CD4-positive, alpha-beta memory T cell (primary cell): ENCODE measurements at regions of chr11 and their contacts with region 1.

Region 1: DNA sequence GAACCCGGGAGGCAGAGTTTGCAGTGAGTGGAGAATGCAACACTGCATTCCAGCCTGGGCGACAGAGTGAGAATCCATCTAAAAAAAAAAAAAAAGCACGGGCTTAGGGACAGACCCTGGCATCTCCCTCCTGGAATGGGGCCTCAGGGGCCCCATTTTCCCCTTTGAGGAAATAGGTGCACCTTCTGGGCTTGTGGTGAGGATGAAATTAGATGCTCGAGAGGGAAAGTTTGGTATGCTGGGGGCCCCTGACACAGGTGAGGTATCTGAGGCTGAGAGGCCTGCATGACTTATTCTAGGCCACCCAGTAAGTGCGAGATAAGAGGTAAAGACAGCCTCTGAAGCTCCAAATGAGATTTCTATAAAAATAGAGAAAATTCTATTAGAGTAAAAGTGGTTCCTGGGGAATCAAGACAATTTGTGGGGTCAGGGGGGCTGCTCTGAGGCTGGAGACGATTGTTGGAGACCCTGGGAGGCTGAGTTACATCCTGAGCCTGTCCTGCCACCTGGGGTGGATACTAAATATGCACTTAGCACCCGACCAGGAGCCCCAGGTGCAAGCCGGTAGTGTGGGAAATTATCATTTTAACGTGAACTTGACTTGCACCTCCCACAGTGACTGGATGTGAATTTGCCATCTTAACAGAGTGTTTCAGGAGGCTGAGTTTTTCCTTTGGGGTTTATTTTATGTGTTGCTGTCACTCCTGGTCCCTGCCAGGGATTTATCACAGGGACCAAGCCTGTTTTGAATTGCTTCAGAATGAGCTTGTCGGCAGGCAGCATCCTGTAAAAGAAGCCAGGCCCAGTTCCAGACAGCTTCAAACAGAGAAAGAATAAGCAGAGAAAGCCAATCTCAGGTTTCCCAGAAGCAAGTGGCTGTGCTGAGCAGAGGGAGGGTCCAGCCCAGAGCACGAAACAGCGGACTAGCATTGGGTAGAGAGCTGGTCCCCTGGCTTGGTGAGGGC is 48.4 kb upstream of the TSKU start:
- DNase-seq: no peak
- H3K4me3 ChIP-seq: no peak overlapping the region
- H3K4me3 Mint-ChIP-seq: no peak overlapping the region
- H3K27ac ChIP-seq: no peak overlapping the region
- H3K27ac Mint-ChIP-seq: no peak overlapping the region
- H3K4me1 ChIP-seq: no peaks in the 10 kb centered on the region
- H3K4me1 Mint-ChIP-seq: no peaks in the 10 kb centered on the region
- H3K27me3 ChIP-seq: no peaks in the 10 kb centered on the region
- H3K27me3 Mint-ChIP-seq: peaks cover 3 to 5% of the 10 kb centered on the region in 2 donors

Region 2: DNA sequence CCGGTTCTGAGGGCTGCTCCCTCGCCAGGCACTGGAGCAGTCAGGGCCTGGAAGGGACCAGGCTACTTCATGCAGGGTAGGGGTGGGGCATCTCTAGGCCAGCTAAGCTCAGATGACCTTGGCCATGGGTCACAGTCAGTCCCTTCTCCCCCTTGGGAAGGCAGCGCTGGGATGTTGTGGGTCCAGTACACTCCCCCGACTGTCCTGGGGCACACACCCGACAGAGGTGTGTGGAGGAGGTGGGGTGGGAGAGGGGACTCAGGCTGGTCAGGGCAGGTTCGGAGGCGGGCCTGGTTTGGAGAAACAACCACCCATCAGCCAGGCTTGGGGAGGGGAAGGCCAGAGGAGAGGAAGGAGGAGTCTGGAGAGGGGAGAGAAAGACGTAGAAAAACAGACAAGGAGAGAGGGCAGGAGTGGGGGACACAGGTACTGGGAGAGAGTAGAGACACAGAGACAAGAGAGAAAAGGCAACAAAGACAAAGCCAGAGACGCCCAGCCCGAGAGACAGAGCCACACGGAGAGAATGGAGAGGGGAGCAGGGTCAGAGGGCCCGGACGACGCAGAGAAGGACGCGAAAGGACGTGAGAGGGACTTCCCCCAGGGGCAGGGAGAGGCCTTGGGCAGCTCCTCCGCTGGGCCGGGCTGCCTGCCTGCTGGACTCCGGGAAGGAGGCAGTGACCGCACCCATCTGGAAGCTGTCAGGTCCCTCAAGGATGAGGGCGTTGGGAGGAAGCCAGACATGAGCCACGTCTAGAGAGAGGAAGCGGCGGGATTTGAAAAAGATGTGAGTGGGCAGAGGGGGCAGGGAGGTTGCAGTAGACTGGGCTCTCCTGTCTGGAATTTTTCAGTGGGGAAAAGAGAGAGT is 17.8 kb after region 1 on chr11:
- CTCF ChIA-PET with region 1: no interaction called
- POLR2A ChIA-PET with region 1: no interaction called
- intact Hi-C with region 1: no loop called
- DNase-seq: no peak
- H3K4me3 ChIP-seq: no peak overlapping the region
- H3K4me3 Mint-ChIP-seq: no peak overlapping the region
- H3K27ac ChIP-seq: no peak overlapping the region
- H3K27ac Mint-ChIP-seq: peak overlapping the region in 1 of 7 donors; percentile 16
- H3K4me1 ChIP-seq: no peaks in the 10 kb centered on the region
- H3K4me1 Mint-ChIP-seq: no peaks in the 10 kb centered on the region
- H3K27me3 ChIP-seq: no peaks in the 10 kb centered on the region
- H3K27me3 Mint-ChIP-seq: peaks cover 4% of the 10 kb centered on the region in 2 donors

Region 3: DNA sequence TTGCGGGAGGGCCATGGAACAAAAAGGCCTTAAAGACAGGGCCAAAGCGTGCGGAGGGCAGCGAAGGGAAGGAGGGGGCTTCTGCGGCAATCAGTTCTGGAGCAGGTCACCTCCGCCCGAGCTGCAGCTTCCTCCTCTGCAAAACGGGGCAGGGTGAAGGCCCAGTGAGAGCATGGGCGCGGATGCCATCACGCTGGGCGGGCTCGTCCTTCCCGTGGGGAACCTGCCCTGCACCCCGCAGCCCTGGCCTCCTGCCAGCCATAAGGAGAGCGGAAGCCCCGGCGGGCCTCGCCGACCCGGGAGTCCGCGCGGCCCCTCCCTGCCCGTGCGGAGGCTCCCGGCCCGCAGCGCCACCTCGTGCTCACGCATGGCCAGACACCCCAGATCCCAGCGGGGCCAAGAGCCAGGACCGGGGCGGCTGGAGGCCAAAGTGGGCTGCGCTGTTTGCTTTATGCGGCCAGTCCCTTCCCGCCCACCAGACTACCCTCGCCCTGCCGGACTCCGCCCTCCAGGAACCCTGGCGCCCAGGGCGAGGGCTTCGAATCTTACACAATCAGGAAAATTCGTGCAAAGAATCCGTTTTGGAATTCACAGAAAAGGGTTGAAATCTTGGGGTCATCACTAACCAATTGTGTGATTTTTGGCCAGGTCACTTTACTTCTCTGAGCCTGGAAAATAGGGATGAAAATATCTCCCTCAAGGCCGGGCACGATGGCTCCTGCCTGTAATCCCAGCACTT is 64.5 kb after region 1 on chr11:
- CTCF ChIA-PET with region 1: interaction called, 166 read pairs
- POLR2A ChIA-PET with region 1: no interaction called
- intact Hi-C with region 1: no loop called
- DNase-seq: peak; percentile 70 to 75 (median 73)
- H3K4me3 ChIP-seq: peak overlapping the region in 1 of 2 donors; percentile 33
- H3K4me3 Mint-ChIP-seq: peak overlapping the region in 7 of 8 donors; percentile 17 to 71 (median 57)
- H3K27ac ChIP-seq: no peak overlapping the region
- H3K27ac Mint-ChIP-seq: peak overlapping the region in 4 of 7 donors; percentile 35 to 64 (median 44)
- H3K4me1 ChIP-seq: peaks cover 14% of the 10 kb centered on the region
- H3K4me1 Mint-ChIP-seq: peaks cover 2 to 22% (median 9%) of the 10 kb centered on the region in 4 donors
- H3K27me3 ChIP-seq: no peaks in the 10 kb centered on the region
- H3K27me3 Mint-ChIP-seq: peaks cover 0 to 8% of the 10 kb centered on the region in 2 donors

Region 4: GRCh38 chr11:77047007-77047927 is 312.5 kb after region 1 on chr11:
- CTCF ChIA-PET with region 1: no interaction called
- POLR2A ChIA-PET with region 1: no interaction called
- intact Hi-C with region 1: loop called (anchors 2 kb)
- DNase-seq: peak; percentile 90 to 94 (median 93)
- H3K4me3 ChIP-seq: peak overlapping the region; percentile 33 to 59
- H3K4me3 Mint-ChIP-seq: peak overlapping the region; percentile 67 to 83 (median 72)
- H3K27ac ChIP-seq: peak overlapping the region; percentile 61
- H3K27ac Mint-ChIP-seq: peak overlapping the region; percentile 24 to 92 (median 60)
- H3K4me1 ChIP-seq: peaks cover 16% of the 10 kb centered on the region
- H3K4me1 Mint-ChIP-seq: peaks cover 5 to 11% (median 6%) of the 10 kb centered on the region in 4 donors
- H3K27me3 ChIP-seq: no peaks in the 10 kb centered on the region
- H3K27me3 Mint-ChIP-seq: peaks cover 2 to 3% of the 10 kb centered on the region in 2 donors